GM13976 (cell line): ENCODE measurements at regions of chr13 and their contacts with region 1.

Region 1: DNA sequence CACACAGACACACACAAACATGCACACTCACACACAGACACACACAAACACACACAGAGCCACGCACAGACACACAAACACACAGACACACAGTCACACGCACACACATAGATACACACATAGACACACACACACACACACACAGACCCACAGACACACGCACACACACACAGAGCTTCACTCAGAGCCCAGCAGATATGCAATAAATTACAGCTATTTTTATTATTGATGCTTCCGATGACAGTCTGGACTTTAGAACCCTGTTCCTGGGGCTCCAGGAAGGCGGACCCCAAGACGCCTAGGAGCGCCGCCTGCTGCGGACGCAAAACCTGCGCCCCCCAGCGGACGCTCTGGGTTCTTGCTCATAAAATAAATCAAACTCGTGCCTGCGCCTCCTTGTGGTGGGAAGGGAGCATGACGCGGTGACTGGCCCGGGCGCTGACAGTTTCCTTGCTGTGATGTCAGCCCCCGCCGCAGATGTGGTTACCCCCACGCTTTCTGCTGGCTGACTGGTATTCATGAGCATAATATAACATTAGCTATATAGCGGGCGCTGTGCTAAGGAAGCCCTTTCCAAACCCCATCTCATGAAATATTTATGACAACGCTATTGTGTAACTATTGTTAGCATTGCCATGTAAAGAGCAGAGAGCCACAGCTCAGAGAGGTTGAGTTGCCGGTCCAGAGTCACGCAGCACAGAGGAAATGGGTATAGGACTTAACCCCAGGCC is 64.4 kb upstream of the TM9SF2 start:
- DNase-seq: peak; percentile 83
- CTCF ChIP-seq: peak; percentile 99

Region 2: DNA sequence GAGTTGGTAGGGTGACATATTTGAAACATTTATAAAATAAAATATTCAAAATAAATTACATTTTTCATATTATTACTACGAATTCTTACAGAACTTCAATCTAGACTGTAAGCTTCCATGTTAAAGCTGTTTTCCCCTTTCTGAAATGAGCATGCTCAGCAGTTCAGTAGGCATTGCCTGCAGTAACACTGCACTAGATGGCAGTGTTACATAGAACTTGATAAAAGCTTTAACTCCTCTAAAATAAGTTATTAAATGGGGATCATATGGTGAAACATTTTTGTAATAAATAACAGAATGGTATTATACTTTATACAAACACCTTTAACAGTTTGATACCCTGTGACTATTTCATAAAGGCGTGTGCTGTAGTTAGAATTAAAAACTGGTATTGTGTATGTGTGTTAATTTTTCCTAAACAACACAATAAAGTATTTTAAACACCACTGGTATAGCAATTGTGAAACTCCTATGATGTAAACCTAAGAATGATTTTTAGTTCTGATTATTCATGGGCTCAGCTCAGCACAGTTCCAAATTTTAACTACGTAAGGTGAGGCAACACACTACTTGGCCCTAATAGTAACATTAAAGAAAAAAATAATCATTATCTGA is 167.1 kb before region 1 on chr13:
- in situ Hi-C with region 1: loop called (anchors 5 kb)
- DNase-seq: peak; percentile 26
- CTCF ChIP-seq: peak; percentile 75

Region 3: DNA sequence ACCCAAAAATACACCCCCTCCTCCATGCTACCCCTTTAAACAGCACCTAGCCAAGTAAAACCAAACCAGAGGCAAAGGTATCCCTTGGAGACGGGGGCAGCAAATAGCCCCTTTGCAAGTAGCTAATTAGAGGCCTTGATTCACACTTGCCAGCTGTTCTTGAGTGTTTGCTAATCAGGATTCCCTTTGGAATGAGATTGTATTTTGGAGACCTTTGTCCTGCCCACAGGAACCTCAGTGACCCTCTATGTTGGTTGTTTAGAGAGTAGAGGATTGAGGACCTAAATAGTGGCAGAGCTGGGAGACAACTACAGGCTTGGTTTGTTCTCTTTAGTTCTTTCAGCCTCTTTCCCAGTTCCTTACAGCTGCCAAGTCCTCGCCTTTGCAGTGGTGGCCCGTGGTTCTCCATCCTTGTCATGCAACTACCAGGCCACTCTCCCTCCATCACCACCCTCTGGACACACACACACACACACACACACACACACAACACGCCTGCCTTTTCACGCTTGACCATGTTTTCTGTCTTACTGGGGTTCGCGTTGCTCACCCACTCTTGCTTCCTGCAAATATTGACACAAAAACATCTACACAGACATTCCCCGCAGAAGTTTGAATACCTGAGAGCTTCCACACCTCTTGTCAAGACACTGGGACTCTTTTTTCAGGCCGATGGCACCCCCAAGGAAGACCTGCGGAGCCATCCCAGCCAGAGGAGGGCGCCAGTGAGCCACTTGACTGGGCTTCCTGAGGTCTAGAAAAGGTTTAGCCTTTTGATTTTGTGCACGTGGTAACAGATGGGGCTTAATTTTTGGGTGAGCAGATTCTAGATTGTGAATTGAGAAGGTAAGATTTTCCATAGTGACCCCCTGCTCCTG is 49.7 kb before region 1 on chr13:
- in situ Hi-C with region 1: loop called (anchors 10 kb)
- DNase-seq: peak; percentile 87
- CTCF ChIP-seq: peak; percentile 85

Region 4: GRCh38 chr13:99892196-99892613 is 455.4 kb after region 1 on chr13:
- in situ Hi-C with region 1: no loop called
- DNase-seq: no peak
- CTCF ChIP-seq: no peak